GM12878 (cell line): ENCODE measurements at regions of chrX and their contacts with region 1.

Region 1: DNA sequence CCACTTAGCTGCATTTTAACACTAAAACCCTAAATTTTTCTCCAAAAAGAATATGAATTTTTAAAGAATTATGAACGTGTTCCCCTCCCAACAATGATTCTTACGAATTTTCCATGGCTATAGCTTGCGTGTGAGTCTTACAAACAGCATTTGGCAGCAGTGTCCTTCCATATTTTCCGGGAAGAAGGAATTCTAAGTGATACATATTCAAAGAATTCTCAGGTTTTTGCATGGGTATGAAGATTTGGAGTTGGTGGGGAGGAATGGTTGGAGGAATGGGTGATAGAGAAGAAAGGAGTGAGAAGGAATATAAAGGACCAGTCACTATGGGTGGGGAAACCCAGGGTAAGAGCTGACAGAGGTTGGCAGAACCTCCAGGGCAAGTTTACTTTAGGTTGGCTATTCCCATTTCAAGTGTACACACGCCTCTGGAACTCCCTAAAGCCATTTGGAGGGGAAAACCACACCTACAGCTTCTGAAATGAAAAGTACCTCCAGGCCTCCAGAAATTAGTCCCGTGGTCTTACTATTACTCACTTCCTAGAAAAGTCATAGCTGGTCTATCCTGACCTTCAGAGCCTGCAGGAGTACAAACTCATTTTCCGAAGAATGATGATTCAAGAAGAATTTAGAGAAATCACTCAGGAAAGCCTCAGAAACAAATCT is 420.8 kb upstream of the DIPK2B start:
- DNase-seq: no peak
- ATAC-seq: peak; percentile 42; the same call in 2 of the 3 replicates
- H3K4me3 ChIP-seq: no peak overlapping the region
- H3K27ac ChIP-seq: no peak overlapping the region
- H3K4me1 ChIP-seq: no peaks in the 10 kb centered on the region
- H3K27me3 ChIP-seq: no peaks in the 10 kb centered on the region
- CTCF ChIP-seq: no peak
- EP300 ChIP-seq: no peak
- POLR2A ChIP-seq: no peak
- RAD21 ChIP-seq: no peak

Region 2: GRCh38 chrX:44795945-44796450 is 825.5 kb before region 1 on chrX:
- CTCF ChIA-PET with region 1: no interaction called
- POLR2A ChIA-PET with region 1: no interaction called
- RAD21 ChIA-PET with region 1: no interaction called
- SMC1A ChIA-PET with region 1: no interaction called
- in situ Hi-C with region 1: no loop called
- intact Hi-C with region 1: no loop called
- DNase-seq: peak; percentile 25
- ATAC-seq: peak; percentile 74
- H3K4me3 ChIP-seq: no peak overlapping the region
- H3K27ac ChIP-seq: no peak overlapping the region
- H3K4me1 ChIP-seq: no peaks in the 10 kb centered on the region
- H3K27me3 ChIP-seq: no peaks in the 10 kb centered on the region
- CTCF ChIP-seq: no peak
- EP300 ChIP-seq: no peak
- POLR2A ChIP-seq: no peak
- RAD21 ChIP-seq: no peak

Region 3: GRCh38 chrX:45596188-45596808 is 25.2 kb before region 1 on chrX:
- CTCF ChIA-PET with region 1: no interaction called
- POLR2A ChIA-PET with region 1: no interaction called
- RAD21 ChIA-PET with region 1: no interaction called
- SMC1A ChIA-PET with region 1: no interaction called
- in situ Hi-C with region 1: no loop called
- intact Hi-C with region 1: no loop called
- DNase-seq: no peak
- ATAC-seq: no peak
- H3K4me3 ChIP-seq: no peak overlapping the region
- H3K27ac ChIP-seq: no peak overlapping the region
- H3K4me1 ChIP-seq: no peaks in the 10 kb centered on the region
- H3K27me3 ChIP-seq: no peaks in the 10 kb centered on the region
- CTCF ChIP-seq: no peak
- EP300 ChIP-seq: no peak
- POLR2A ChIP-seq: no peak
- RAD21 ChIP-seq: no peak

Region 4: GRCh38 chrX:45749375-45749774 is 127.9 kb after region 1 on chrX:
- CTCF ChIA-PET with region 1: no interaction called
- POLR2A ChIA-PET with region 1: interaction called, 3 read pairs
- RAD21 ChIA-PET with region 1: no interaction called
- SMC1A ChIA-PET with region 1: no interaction called
- in situ Hi-C with region 1: no loop called
- intact Hi-C with region 1: loop called (anchors 5 kb)
- DNase-seq: no peak
- ATAC-seq: 0 out of 3 replicates have a peak, but pooled peaks have one; percentile 19
- H3K4me3 ChIP-seq: no peak overlapping the region
- H3K27ac ChIP-seq: no peak overlapping the region
- H3K4me1 ChIP-seq: no peaks in the 10 kb centered on the region
- H3K27me3 ChIP-seq: no peaks in the 10 kb centered on the region
- CTCF ChIP-seq: peak; percentile 21 to 47 (median 28); a peak in 4 of 6 replicates
- EP300 ChIP-seq: no peak
- POLR2A ChIP-seq: no peak
- RAD21 ChIP-seq: peak; percentile 36; the same call in 1 of the 2 replicates